ENCODE measurements at regions of chr3 and their contacts with region 1.

Region 1: DNA sequence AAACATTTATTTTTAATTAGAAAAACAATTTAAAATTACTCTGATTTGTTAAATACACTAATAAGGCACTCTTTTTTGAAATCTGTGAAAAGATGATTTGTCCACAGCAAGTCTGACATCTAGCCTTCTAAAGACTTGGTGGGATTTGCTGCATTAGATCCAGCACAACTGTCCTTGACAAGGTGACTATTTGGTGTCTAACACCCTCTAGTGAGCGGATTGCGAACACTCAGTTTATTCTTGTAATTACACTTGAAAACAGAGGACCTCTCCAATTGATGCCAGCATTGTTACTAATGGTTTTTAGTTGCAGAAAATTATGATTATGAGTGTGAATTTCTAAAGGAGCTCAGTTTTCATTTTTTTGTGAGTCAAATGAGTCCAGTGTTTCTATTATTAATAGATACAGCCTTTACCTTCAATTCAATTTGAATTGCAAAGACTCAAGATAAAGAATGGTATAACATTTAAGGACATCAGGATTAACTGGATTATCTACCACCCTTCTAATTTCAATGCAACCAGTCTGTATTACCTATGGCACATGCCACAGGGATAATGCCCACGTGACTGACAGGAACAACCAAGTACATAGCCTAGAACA is 29.7 kb upstream of the STRIT1 start:
- DNase-seq: peak; percentile 68
- ATAC-seq: peak; percentile 82
- H3K4me3 ChIP-seq: no peak overlapping the region
- H3K27ac ChIP-seq: no peak overlapping the region
- H3K4me1 ChIP-seq: no peaks in the 10 kb centered on the region
- H3K27me3 ChIP-seq: no peaks in the 10 kb centered on the region
- CTCF ChIP-seq: peak; percentile 66 to 85 (median 80)
- POLR2A ChIP-seq: no peak
- RAD21 ChIP-seq: peak; percentile 93

Region 2: DNA sequence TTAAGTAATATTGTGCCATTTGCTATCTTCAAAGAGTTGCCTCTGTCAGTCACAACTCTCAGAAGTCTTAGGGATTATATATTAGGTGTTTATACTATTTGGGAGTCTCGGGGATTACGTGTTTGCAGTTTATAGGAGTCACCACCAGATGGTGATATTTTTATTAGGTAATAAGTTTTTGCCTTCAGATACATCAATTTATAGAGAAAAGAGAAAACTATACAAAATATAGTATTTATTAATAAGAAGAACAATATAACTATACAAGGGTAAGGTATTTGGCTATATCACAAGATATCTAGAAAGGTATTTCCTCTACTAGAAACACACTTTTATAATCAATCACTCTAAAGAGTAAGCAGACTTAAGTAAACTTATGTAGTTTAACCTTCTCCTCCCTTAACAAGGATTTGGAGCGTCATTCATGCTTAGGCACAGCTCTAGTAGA is 988.2 kb before region 1 on chr3:
- CTCF ChIA-PET with region 1: no interaction called
- POLR2A ChIA-PET with region 1: no interaction called
- RAD21 ChIA-PET with region 1: no interaction called
- intact Hi-C with region 1: loop called (anchors 5 kb)
- DNase-seq: no peak
- ATAC-seq: peak; percentile 59; the same call in 1 of the 2 replicates
- H3K4me3 ChIP-seq: no peak overlapping the region
- H3K27ac ChIP-seq: no peak overlapping the region
- H3K4me1 ChIP-seq: no peaks in the 10 kb centered on the region
- H3K27me3 ChIP-seq: no peaks in the 10 kb centered on the region
- CTCF ChIP-seq: peak; percentile 42 to 53 (median 49); a peak in 5 of 6 replicates
- POLR2A ChIP-seq: no peak
- RAD21 ChIP-seq: peak; percentile 68

Region 3: DNA sequence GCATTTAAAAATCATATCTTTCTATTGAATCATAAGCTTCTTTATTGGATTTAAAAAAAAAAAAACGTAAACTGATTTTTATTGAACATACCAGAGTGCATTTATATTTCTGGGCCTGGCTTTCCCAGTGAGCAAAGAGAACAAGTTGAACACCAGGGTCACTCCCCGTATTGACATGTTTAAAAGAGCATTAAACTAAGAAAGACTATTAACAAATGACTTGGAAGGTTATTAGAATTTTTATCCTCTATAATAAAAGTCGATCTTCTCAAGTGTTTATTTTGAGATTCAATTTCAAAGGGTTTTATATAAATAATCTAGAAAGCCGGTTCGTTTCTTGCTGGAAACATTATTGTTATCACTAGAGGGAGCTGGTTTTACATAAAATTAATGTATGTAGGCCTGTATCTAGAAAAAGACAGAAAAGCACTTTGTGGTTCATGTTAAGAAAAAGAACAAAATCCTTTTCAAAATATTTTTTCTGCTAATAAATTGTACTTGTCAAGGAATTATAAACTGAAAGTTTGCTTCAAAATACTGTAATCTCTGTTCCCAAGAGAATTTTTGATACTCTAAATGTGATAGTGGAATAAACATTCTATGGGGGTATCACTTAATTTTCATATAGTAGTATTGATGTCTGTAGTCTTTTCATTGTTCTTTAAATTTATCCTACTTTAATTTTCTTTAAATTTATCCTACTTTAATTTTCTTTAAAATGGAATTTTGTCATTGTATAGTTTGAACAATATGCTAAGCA is 564.9 kb before region 1 on chr3:
- CTCF ChIA-PET with region 1: interaction called, 4 read pairs
- POLR2A ChIA-PET with region 1: no interaction called
- RAD21 ChIA-PET with region 1: no interaction called
- intact Hi-C with region 1: loop called (anchors 1 kb)
- DNase-seq: no peak
- ATAC-seq: peak; percentile 53; the same call in 1 of the 2 replicates
- H3K4me3 ChIP-seq: no peak overlapping the region
- H3K27ac ChIP-seq: no peak overlapping the region
- H3K4me1 ChIP-seq: no peaks in the 10 kb centered on the region
- H3K27me3 ChIP-seq: no peaks in the 10 kb centered on the region
- CTCF ChIP-seq: peak; percentile 35 to 54 (median 48)
- POLR2A ChIP-seq: no peak
- RAD21 ChIP-seq: peak; percentile 62

Region 4: GRCh38 chr3:154904328-154904727 is 418.8 kb before region 1 on chr3:
- CTCF ChIA-PET with region 1: interaction called, 4 read pairs
- POLR2A ChIA-PET with region 1: no interaction called
- RAD21 ChIA-PET with region 1: no interaction called
- intact Hi-C with region 1: loop called (anchors 1 kb)
- DNase-seq: peak; percentile 33
- ATAC-seq: peak; percentile 94
- H3K4me3 ChIP-seq: no peak overlapping the region
- H3K27ac ChIP-seq: no peak overlapping the region
- H3K4me1 ChIP-seq: no peaks in the 10 kb centered on the region
- H3K27me3 ChIP-seq: no peaks in the 10 kb centered on the region
- CTCF ChIP-seq: peak; percentile 38 to 62 (median 59); a peak in 5 of 6 replicates
- POLR2A ChIP-seq: no peak
- RAD21 ChIP-seq: peak; percentile 58

Region 5: DNA sequence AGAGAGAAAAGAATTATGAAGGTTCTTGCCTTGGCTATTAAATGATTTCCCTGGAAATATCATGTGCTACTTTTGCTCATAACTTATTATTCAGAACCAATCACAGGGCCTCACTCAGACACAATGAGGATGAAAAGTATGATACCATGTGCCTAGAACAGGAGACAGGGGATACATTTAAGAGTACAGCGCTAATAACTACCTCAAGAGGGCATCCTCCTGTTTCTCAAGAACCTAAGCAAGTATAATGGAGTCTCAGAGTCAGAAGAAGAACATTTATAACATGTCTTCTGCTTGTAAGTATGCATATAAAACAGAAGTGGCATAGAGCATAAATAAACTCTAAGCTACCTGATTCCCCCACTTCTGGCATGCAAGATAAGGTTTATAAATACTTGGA is 368.4 kb before region 1 on chr3:
- CTCF ChIA-PET with region 1: interaction called, 11 read pairs
- POLR2A ChIA-PET with region 1: no interaction called
- RAD21 ChIA-PET with region 1: interaction called in 1 of 2 experiments, 4 read pairs
- intact Hi-C with region 1: loop called (anchors 1 kb)
- DNase-seq: peak; percentile 51
- ATAC-seq: peak; percentile 93
- H3K4me3 ChIP-seq: no peak overlapping the region
- H3K27ac ChIP-seq: no peak overlapping the region
- H3K4me1 ChIP-seq: no peaks in the 10 kb centered on the region
- H3K27me3 ChIP-seq: no peaks in the 10 kb centered on the region
- CTCF ChIP-seq: peak; percentile 31 to 55 (median 46); a peak in 4 of 6 replicates
- POLR2A ChIP-seq: no peak
- RAD21 ChIP-seq: peak; percentile 68

Region 6: DNA sequence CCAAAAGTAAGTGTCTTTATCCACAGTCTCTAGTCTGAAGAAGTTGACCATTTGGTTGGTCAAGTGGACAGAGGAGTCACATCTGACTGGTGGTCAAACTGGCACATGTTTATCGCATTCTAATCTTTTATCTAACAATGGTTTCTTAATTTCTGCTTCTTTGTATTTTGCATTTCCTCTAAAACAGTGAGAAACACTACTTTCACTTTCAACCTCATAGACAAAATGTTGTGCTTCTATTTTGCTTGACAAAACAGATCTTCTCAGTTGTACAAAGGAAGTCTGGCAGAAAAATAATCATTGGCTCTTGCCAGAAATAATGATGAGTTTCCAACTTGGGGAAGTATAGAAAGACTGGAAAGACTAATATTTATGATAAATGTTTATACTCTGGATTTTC is 139.2 kb before region 1 on chr3:
- CTCF ChIA-PET with region 1: no interaction called
- POLR2A ChIA-PET with region 1: no interaction called
- RAD21 ChIA-PET with region 1: no interaction called
- intact Hi-C with region 1: no loop called
- DNase-seq: no peak
- ATAC-seq: no peak
- H3K4me3 ChIP-seq: no peak overlapping the region
- H3K27ac ChIP-seq: no peak overlapping the region
- H3K4me1 ChIP-seq: no peaks in the 10 kb centered on the region
- H3K27me3 ChIP-seq: no peaks in the 10 kb centered on the region
- CTCF ChIP-seq: no peak
- POLR2A ChIP-seq: no peak
- RAD21 ChIP-seq: no peak